ENCODE measurements at regions of chr13 and their contacts with region 1.

Region 1: DNA sequence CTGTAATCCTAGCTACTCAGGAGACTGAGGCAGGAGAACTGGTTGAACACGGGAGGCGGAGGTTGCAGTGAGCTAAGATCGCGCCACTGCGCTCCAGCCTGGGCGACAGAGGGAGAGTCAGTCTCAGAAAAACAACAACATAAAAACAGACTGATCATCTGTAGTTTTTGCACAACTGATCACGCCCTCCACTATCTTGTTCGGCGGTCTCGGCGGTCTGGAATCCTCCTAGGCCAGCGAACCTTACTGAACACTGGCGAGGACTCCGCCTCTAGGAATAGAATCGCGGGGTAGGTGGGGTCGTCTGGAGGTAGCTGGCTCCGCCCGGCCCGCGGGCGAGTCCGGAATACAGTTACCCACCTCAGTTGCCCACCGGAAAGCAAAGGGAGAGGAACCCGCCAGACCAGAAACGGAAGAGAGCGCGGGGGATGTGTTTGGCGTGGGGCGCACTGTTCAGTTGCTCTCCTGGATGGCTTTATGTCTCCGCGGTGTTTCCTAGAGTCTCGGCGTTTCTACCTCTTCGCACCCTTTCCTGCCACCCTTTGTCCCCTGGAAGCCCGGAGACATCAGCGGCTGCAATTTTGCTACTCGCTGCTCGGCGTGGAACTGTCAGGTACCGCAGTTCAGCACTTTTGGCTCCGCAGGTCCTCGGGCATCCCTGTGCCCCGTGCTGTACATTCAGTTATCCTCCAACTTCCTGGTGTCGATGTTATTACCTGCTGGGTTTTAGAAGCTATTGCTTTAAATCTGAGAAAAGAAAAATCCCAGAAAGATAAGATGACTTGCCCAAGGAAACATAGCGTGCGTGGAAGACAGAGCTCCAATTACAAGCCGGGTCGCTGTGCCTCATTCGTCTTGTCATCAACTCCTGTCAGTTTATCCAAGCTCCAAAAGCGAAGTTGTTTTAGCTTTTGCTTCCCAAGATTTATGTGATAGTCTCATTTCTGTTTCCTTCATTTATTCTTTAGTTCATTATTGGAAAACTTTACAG is 24.9 kb upstream of the HNRNPA1L2 start:
- DNase-seq: peak; percentile 76 to 88
- ATAC-seq: peak; percentile 93 to 99 (median 98)
- H3K4me3 ChIP-seq: peak overlapping the region; percentile 87
- H3K27ac ChIP-seq: peak overlapping the region; percentile 72
- H3K4me1 ChIP-seq: peaks cover 3% of the 10 kb centered on the region
- H3K27me3 ChIP-seq: no peaks in the 10 kb centered on the region
- CTCF ChIP-seq: no peak

Region 2: DNA sequence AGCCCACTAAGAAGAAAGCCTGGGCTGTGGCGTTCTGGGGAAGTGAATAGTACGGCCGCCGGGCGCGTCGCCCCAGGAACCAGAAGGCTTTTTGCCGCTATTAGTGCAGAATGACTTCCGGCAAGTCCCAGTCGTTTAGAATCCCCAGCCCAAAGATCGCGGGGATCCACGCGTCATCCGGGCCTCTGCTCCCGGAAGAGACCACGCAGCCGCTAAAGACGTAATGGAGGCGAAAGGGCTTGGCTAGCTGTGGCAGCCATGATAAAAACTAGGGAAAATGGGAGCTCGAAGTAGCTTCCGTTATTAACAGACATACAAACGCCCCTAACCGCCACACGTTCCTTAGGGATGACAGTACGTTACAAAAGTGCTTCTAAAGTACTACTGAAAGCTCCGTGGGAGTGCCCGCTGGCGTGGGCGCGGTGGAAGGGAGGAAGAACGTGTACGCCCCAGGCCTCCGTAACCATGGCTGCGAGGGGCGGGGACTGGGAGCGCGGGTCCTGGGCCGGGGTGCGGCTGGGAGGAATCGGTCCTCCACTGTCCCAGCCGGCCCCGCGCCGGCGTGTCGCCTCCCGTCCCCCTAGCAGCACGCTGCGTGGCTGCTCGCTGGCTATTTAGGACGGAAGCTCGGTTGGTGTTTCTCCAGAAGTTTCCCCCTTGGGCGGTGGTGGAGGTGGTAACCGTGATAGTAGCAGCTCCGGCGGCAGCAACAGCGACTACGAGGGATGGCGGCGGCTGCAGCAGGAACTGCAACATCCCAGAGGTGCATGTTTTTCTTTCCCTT is 35.0 kb after region 1 on chr13 and contains the start of gene SUGT1:
- intact Hi-C with region 1: loop called (anchors 5 kb)
- DNase-seq: peak; percentile 98 to 99
- ATAC-seq: peak; percentile 98 to 99 (median 98)
- H3K4me3 ChIP-seq: peak within 1 kb of the TSS; percentile 91
- H3K27ac ChIP-seq: peak within 1 kb of the TSS; percentile 88
- H3K4me1 ChIP-seq: peaks cover 23% of the 10 kb centered on the region
- H3K27me3 ChIP-seq: no peaks in the 10 kb centered on the region
- CTCF ChIP-seq: peak; percentile 66
- total RNA-seq, gene SUGT1: 39.4 to 49.4 (median 42.0) TPM

Measured in psoas muscle (tissue), 8 donors.